ENCODE measurements at regions of chr16 and their contacts with region 1.

Region 1: GRCh38 chr16:10622036-10622921 is 41.9 kb upstream of the EMP2 start:
- DNase-seq: peak; percentile 94 to 98
- H3K4me3 ChIP-seq: peak overlapping the region; percentile 31
- H3K4me3 Mint-ChIP-seq: peak overlapping the region; percentile 82
- H3K27ac Mint-ChIP-seq: peak overlapping the region; percentile 93
- H3K4me1 ChIP-seq: peaks cover 69% of the 10 kb centered on the region
- H3K4me1 Mint-ChIP-seq: peaks cover 31% of the 10 kb centered on the region
- H3K27me3 ChIP-seq: no peaks in the 10 kb centered on the region
- H3K27me3 Mint-ChIP-seq: no peaks in the 10 kb centered on the region
- CTCF ChIP-seq: no peak

Region 2: GRCh38 chr16:10521681-10522274 is 100.5 kb before region 1 on chr16:
- CTCF ChIA-PET with region 1: no interaction called
- POLR2A ChIA-PET with region 1: no interaction called
- intact Hi-C with region 1: loop called (anchors 1 kb)
- DNase-seq: peak in 1 of 2 experiments; percentile 30
- H3K4me3 ChIP-seq: no peak overlapping the region
- H3K4me3 Mint-ChIP-seq: no peak overlapping the region
- H3K27ac Mint-ChIP-seq: no peak overlapping the region
- H3K4me1 ChIP-seq: peaks cover 16% of the 10 kb centered on the region
- H3K4me1 Mint-ChIP-seq: peaks cover 25% of the 10 kb centered on the region
- H3K27me3 ChIP-seq: no peaks in the 10 kb centered on the region
- H3K27me3 Mint-ChIP-seq: no peaks in the 10 kb centered on the region
- CTCF ChIP-seq: peak; percentile 12 to 22

Region 3: GRCh38 chr16:10579965-10580882 is 42.1 kb before region 1 on chr16 and contains the start of gene EMP2:
- CTCF ChIA-PET with region 1: interaction called, 6 read pairs
- POLR2A ChIA-PET with region 1: interaction called, 9 read pairs
- intact Hi-C with region 1: loop called (anchors 1 kb)
- DNase-seq: peak; percentile 85 to 93
- H3K4me3 ChIP-seq: peak within 1 kb of the TSS; percentile 96
- H3K4me3 Mint-ChIP-seq: peak within 1 kb of the TSS; percentile 90
- H3K27ac Mint-ChIP-seq: peak within 1 kb of the TSS; percentile 93
- H3K4me1 ChIP-seq: peaks cover 49% of the 10 kb centered on the region
- H3K4me1 Mint-ChIP-seq: peaks cover 50% of the 10 kb centered on the region
- H3K27me3 ChIP-seq: no peaks in the 10 kb centered on the region
- H3K27me3 Mint-ChIP-seq: no peaks in the 10 kb centered on the region
- CTCF ChIP-seq: peak; percentile 48 to 81
- total RNA-seq, gene EMP2: 187 and 198 TPM in 2 replicates

Region 4: DNA sequence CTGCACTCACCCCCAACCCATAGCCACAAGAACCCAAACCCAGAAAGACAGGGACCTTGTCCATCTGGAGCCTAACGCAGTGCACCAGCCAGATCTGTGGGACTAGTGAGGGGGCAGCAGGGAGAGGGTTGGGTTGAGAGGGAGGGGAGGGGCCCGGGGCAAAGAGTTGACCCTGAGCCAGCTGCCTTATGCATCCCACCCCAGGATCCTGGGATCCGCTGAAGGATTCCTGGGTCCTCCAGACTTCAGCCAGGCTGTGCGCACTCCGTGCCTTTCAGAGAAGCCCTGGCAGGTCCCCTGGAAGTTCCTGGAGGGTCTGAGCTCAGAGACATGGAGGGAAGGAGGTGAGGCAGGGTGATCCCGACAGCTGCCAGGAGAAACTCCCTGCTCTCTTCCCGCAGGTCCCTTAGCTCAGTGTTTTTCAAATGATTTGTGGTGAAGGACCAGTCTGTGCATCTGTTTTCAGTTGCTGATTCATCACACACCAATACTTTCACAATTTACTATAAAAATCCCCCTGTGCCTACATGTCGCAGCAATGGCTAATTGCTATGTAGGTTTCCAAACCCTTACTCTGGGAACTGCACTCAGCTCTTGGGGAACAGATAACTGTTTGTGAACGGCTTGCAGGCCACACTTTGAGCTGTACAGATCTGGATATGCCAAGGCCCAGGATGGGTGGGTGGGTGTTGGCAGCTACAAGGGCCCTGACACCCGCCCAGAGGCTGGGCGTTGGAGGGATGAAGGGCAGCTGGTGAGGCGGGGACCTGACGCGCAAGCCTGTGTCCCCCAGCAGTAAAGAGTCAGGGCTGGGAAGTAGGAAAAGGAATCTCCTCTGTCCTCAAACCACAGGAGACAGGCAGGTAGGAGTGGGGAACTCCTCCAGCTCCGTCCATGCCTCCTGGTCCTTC is 21.5 kb before region 1 on chr16:
- CTCF ChIA-PET with region 1: no interaction called
- POLR2A ChIA-PET with region 1: interaction called, 9 read pairs
- intact Hi-C with region 1: loop called (anchors 1 kb)
- DNase-seq: no peak
- H3K4me3 ChIP-seq: no peak overlapping the region
- H3K4me3 Mint-ChIP-seq: no peak overlapping the region
- H3K27ac Mint-ChIP-seq: peak overlapping the region; percentile 98
- H3K4me1 ChIP-seq: peaks cover 30% of the 10 kb centered on the region
- H3K4me1 Mint-ChIP-seq: peaks cover 24% of the 10 kb centered on the region
- H3K27me3 ChIP-seq: no peaks in the 10 kb centered on the region
- H3K27me3 Mint-ChIP-seq: no peaks in the 10 kb centered on the region
- CTCF ChIP-seq: no peak

Measured in Caco-2 (cell line).